T-cell (primary cell): ENCODE measurements at regions of chr7 and their contacts with region 1.

Region 1: DNA sequence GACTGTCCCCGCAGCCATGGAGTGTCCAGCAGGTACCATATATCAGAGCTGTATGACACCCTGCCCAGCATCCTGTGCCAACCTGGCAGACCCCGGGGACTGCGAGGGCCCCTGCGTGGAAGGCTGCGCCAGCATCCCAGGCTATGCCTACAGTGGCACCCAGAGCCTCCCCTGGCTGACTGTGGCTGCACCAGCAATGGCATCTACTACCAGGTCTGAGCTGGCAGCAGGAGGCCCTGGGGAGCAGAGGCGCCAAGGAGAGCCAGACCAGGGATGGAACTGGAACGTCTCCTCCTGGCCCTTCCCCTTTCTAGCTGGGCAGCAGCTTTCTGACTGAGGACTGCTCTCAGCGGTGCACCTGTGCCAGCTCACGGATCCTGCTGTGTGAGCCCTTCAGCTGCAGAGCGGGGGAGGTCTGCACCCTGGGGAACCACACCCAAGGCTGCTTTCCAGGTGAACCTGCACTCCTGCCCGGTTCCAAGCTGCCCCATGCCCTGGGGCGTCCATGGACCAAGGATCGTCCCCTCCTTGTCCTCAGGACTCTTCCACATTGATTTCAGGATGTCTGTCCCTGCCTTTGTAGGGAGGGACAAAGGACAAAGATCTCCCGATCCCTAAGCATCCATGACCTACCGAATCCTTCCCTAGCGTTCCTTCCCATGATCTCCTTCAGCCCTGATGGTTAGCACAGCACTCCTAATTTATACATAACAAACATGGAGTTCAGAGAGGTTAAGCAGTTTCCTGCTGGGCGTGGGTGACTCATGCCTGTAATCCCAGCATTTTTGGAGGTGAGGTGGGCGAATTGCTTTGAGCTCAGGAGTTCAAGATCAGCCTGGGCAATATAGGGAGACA is 33.3 kb downstream of the EPHB4 start:
- DNase-seq: no peak
- ATAC-seq: no peak
- H3K4me3 ChIP-seq: no peak overlapping the region
- H3K4me3 Mint-ChIP-seq: no peak overlapping the region
- H3K27ac ChIP-seq: no peak overlapping the region
- H3K27ac Mint-ChIP-seq: no peak overlapping the region
- H3K4me1 ChIP-seq: no peaks in the 10 kb centered on the region
- H3K4me1 Mint-ChIP-seq: no peaks in the 10 kb centered on the region
- H3K27me3 ChIP-seq: peaks cover 0 to 39% of the 10 kb centered on the region in 2 experiments
- H3K27me3 Mint-ChIP-seq: peaks cover 15 to 25% of the 10 kb centered on the region in 2 donors

Region 2: GRCh38 chr7:99829524-99830160 is 964.4 kb before region 1 on chr7:
- CTCF ChIA-PET with region 1: no interaction called
- POLR2A ChIA-PET with region 1: interaction called in 1 of 2 experiments, 13 read pairs
- DNase-seq: no peak
- ATAC-seq: no peak
- H3K4me3 ChIP-seq: no peak overlapping the region
- H3K4me3 Mint-ChIP-seq: no peak overlapping the region
- H3K27ac ChIP-seq: no peak overlapping the region
- H3K27ac Mint-ChIP-seq: no peak overlapping the region
- H3K4me1 ChIP-seq: no peaks in the 10 kb centered on the region
- H3K4me1 Mint-ChIP-seq: no peaks in the 10 kb centered on the region
- H3K27me3 ChIP-seq: no peaks in the 10 kb centered on the region
- H3K27me3 Mint-ChIP-seq: peaks cover 12 to 26% of the 10 kb centered on the region in 2 donors

Region 3: GRCh38 chr7:101066141-101066832 is 272.3 kb after region 1 on chr7:
- CTCF ChIA-PET with region 1: no interaction called
- POLR2A ChIA-PET with region 1: no interaction called
- DNase-seq: no peak
- ATAC-seq: no peak
- H3K4me3 ChIP-seq: no peak overlapping the region
- H3K4me3 Mint-ChIP-seq: no peak overlapping the region
- H3K27ac ChIP-seq: no peak overlapping the region
- H3K27ac Mint-ChIP-seq: no peak overlapping the region
- H3K4me1 ChIP-seq: no peaks in the 10 kb centered on the region
- H3K4me1 Mint-ChIP-seq: no peaks in the 10 kb centered on the region
- H3K27me3 ChIP-seq: peaks cover 2 to 64% of the 10 kb centered on the region in 2 experiments
- H3K27me3 Mint-ChIP-seq: peaks cover 36 to 43% of the 10 kb centered on the region in 2 donors